Natural killer cell (primary cell): ENCODE measurements at regions of chr14 and their contacts with region 1.

Region 1: DNA sequence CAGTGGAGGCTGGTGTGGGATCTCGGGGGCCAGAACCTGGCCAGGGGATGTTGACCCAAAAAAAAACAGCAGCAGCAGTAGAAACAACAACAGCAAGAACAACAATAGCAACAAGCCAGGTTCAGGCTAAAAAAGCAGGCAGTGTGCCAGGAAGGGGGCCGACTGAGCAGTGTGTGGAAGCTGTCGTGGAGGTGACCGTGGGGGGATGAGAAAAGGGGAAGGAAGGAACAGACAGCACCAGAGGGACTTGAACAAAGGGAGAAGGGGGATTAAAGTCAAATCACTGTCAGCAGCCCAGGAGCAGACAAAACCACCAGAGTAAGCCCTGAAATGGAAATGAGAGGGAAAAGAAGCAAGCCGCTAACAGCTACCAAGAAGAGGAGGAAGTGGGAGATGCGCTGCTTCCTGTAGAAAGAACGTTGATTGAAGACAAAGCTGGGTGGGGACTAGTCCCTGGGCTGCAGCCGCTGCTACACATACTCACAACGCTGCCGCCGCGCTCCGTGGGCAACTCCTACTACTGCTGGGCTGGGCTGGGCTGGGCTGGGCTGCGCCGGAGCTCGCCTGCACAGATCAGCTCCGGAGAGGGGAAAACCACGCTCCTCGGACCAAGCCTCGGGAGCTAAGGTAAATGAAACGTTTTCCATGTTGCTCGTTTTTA is at the start of gene GNG2:
- DNase-seq: peak; percentile 76 to 93
- ATAC-seq: peak; percentile 77 to 96 (median 91)
- H3K4me3 ChIP-seq: peak within 1 kb of the TSS; percentile 73
- H3K4me3 Mint-ChIP-seq: peak within 1 kb of the TSS; percentile 91
- H3K27ac ChIP-seq: peak within 1 kb of the TSS; percentile 82
- H3K27ac Mint-ChIP-seq: no peak within 1 kb of the TSS
- H3K4me1 ChIP-seq: peaks cover 28% of the 10 kb centered on the region
- H3K4me1 Mint-ChIP-seq: peaks cover 67 to 71% of the 10 kb centered on the region in 2 donors
- H3K27me3 ChIP-seq: no peaks in the 10 kb centered on the region
- H3K27me3 Mint-ChIP-seq: no peaks in the 10 kb centered on the region
- CTCF ChIP-seq: no peak
- total RNA-seq, gene GNG2: 552 to 653 (median 582) TPM

Region 2: GRCh38 chr14:51901475-51902024 is 41.3 kb after region 1 on chr14:
- intact Hi-C with region 1: loop called (anchors 2 kb)
- DNase-seq: peak in 1 of 2 donors; percentile 66
- ATAC-seq: peak; percentile 20 to 37 (median 32)
- H3K4me3 ChIP-seq: no peak overlapping the region
- H3K4me3 Mint-ChIP-seq: peak overlapping the region; percentile 53
- H3K27ac ChIP-seq: no peak overlapping the region
- H3K27ac Mint-ChIP-seq: peak overlapping the region; percentile 86 to 94
- H3K4me1 ChIP-seq: peaks cover 22% of the 10 kb centered on the region
- H3K4me1 Mint-ChIP-seq: peaks cover 86 to 91% of the 10 kb centered on the region in 2 donors
- H3K27me3 ChIP-seq: no peaks in the 10 kb centered on the region
- H3K27me3 Mint-ChIP-seq: no peaks in the 10 kb centered on the region
- CTCF ChIP-seq: no peak

Region 3: GRCh38 chr14:51979088-51979709 is 118.9 kb after region 1 on chr14:
- intact Hi-C with region 1: loop called (anchors 5 kb)
- DNase-seq: peak; percentile 79 to 90
- ATAC-seq: peak; percentile 79 to 98 (median 86)
- H3K4me3 ChIP-seq: no peak overlapping the region
- H3K4me3 Mint-ChIP-seq: no peak overlapping the region
- H3K27ac ChIP-seq: no peak overlapping the region
- H3K27ac Mint-ChIP-seq: no peak overlapping the region
- H3K4me1 ChIP-seq: peaks cover 7% of the 10 kb centered on the region
- H3K4me1 Mint-ChIP-seq: peaks cover 12 to 17% of the 10 kb centered on the region in 2 donors
- H3K27me3 ChIP-seq: no peaks in the 10 kb centered on the region
- H3K27me3 Mint-ChIP-seq: no peaks in the 10 kb centered on the region
- CTCF ChIP-seq: peak; percentile 92

Region 4: GRCh38 chr14:51996148-51996746 is 136.0 kb after region 1 on chr14:
- intact Hi-C with region 1: no loop called
- DNase-seq: peak in 1 of 2 donors; percentile 72
- ATAC-seq: peak in 2 of 3 donors; percentile 50 to 57
- H3K4me3 ChIP-seq: no peak overlapping the region
- H3K4me3 Mint-ChIP-seq: no peak overlapping the region
- H3K27ac ChIP-seq: no peak overlapping the region
- H3K27ac Mint-ChIP-seq: peak overlapping the region in 1 of 2 donors; percentile 68
- H3K4me1 ChIP-seq: no peaks in the 10 kb centered on the region
- H3K4me1 Mint-ChIP-seq: peaks cover 7 to 10% of the 10 kb centered on the region in 2 donors
- H3K27me3 ChIP-seq: no peaks in the 10 kb centered on the region
- H3K27me3 Mint-ChIP-seq: no peaks in the 10 kb centered on the region
- CTCF ChIP-seq: peak; percentile 86

Region 5: GRCh38 chr14:52918486-52918885 is 1058.2 kb after region 1 on chr14:
- intact Hi-C with region 1: loop called (anchors 10 kb)
- DNase-seq: peak in 1 of 2 donors; percentile 81
- ATAC-seq: peak; percentile 89 to 97 (median 95)
- H3K4me3 ChIP-seq: no peak overlapping the region
- H3K4me3 Mint-ChIP-seq: peak overlapping the region; percentile 25
- H3K27ac ChIP-seq: peak overlapping the region; percentile 94
- H3K27ac Mint-ChIP-seq: peak overlapping the region; percentile 93
- H3K4me1 ChIP-seq: peaks cover 25% of the 10 kb centered on the region
- H3K4me1 Mint-ChIP-seq: peaks cover 52 to 62% of the 10 kb centered on the region in 2 donors
- H3K27me3 ChIP-seq: no peaks in the 10 kb centered on the region
- H3K27me3 Mint-ChIP-seq: no peaks in the 10 kb centered on the region
- CTCF ChIP-seq: no peak